AG04449 (cell line): ENCODE measurements at regions of chr5 and their contacts with region 1.

Region 1: DNA sequence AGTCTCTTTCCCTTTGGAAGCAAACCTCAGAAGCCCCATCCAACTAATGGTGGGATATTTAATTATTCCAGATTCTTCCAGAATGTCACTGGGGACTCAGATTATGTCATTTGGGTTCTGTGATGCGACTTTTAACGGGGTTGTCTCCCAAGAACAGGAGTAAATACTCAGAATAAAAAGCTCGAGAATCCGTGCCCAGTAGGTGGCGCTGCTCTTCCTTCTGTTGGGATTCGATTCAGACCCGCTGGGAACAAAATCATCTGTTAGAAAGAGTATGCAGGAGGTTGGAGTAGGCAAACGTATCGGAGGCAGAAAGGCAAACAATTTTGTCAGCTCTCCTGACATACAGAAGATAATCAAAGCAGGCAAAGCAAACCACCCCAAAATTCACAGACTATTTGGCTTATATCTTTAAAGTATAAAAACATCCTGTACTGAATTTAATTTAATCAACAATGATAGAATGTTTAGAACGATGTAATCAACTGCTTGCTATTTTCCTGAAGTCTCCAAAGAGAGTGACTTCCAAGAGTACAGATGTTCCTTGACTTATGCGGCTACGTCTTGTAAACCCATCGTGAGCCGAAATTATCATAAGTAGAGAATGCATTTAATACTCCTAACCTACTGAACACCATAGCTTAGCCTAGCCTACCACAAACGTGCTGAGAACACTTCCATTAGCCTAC is 169.8 kb upstream of the RAI14 start:
- DNase-seq: peak; percentile 54
- H3K4me3 ChIP-seq: no peak overlapping the region
- CTCF ChIP-seq: peak; percentile 70

Region 2: GRCh38 chr5:33537240-33537639 is 949.1 kb before region 1 on chr5:
- CTCF ChIA-PET with region 1: no interaction called
- POLR2A ChIA-PET with region 1: no interaction called
- DNase-seq: no peak
- H3K4me3 ChIP-seq: no peak overlapping the region
- CTCF ChIP-seq: no peak

Region 3: DNA sequence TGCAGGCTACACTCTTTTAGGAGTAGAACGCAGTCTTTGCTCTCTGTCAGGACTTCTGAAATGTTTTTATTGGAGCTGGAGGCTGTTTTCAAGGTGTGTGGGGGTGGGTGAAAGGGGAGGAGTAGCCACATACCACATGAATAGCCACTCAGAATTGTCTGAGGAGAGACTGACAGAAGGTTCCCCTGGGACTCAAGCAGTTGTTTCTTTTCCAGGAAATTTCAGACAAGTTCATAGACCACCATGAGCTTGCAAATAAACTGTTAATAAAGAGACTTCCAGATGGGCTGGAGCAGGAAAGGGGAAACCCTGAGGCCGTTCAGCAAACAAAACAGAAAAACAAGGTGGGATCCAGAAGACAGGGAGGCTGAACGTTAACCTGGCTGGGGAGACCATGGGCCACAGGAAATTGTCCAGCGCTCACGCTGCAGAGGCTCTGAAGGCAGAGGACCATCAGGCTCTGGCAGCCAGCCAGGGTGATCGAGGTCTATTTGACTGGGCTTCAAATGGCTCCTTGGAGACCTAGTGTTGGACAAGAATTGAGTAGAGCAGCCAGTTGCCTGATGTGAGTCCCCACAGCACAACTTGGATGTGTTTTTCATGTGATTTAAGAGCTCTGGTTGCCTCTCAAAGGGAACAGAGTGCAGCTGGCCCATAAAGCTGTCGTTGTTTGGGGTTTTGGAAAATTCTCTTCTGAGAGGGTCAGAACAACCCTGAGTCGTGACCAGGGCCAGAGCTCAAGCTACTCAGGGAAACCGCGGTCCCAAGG is 10.6 kb after region 1 on chr5:
- CTCF ChIA-PET with region 1: interaction called, 12 read pairs
- POLR2A ChIA-PET with region 1: interaction called, 4 read pairs
- DNase-seq: no peak
- H3K4me3 ChIP-seq: no peak overlapping the region
- CTCF ChIP-seq: no peak

Region 4: GRCh38 chr5:34533582-34534522 is 47.5 kb after region 1 on chr5:
- CTCF ChIA-PET with region 1: interaction called, 22 read pairs
- POLR2A ChIA-PET with region 1: no interaction called
- DNase-seq: peak; percentile 88
- H3K4me3 ChIP-seq: no peak overlapping the region
- CTCF ChIP-seq: no peak

Region 5: GRCh38 chr5:34674187-34674586 is 187.9 kb after region 1 on chr5:
- CTCF ChIA-PET with region 1: interaction called, 10 read pairs
- POLR2A ChIA-PET with region 1: no interaction called
- DNase-seq: peak; percentile 92
- H3K4me3 ChIP-seq: no peak overlapping the region
- CTCF ChIP-seq: no peak

Region 6: GRCh38 chr5:34717426-34718327 is 231.4 kb after region 1 on chr5:
- CTCF ChIA-PET with region 1: interaction called, 12 read pairs
- POLR2A ChIA-PET with region 1: no interaction called
- DNase-seq: peak; percentile 97
- H3K4me3 ChIP-seq: no peak overlapping the region
- CTCF ChIP-seq: no peak

Region 7: GRCh38 chr5:34944044-34944443 is 457.7 kb after region 1 on chr5:
- CTCF ChIA-PET with region 1: no interaction called
- POLR2A ChIA-PET with region 1: no interaction called
- DNase-seq: no peak
- H3K4me3 ChIP-seq: no peak overlapping the region
- CTCF ChIP-seq: no peak

Region 8: DNA sequence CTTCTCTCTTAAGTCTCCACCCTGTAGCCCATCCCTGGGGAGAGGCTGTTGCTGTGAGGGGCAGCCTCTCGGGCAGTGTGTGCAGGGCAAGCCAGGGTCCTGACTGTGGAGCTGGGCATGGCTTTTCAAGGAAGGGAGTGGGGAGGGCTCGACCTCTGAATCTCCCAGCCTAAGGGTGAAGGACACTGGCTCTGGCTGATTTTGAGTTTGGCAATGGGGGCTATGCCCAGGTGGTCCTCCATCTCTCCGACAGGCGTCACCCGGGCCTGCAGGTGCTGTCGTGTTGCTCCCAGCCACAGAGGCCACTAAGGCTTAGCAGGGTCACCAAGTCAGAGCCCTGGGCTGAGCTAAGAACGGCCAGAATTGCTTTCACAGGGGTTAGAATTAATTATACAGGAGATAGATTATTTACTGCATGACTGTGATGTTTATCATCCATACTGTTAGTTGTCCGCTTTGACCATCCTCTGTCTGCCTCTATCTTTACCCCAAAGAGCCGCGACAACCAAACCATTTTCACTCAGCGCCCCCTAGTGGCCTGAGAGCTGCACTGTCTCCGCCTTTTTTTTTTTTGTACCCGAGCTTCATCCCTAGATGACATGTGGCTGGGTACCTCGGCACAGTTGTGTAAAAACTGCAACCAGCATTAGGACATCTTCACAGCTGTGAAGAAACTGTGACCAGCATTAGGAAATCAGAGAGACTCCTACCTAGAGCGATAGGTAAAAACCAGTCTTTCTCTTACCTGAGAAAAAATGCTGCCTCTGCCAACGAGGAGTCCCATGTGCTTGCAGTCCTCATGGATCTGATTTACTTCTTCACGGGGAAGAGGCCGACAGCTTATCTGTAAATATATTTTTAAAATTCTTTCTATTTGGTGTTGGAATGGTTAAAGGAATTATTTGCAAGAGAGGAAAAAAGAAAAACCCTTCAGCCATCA is 517.0 kb after region 1 on chr5:
- CTCF ChIA-PET with region 1: interaction called, 10 read pairs
- POLR2A ChIA-PET with region 1: no interaction called
- DNase-seq: no peak
- H3K4me3 ChIP-seq: no peak overlapping the region
- CTCF ChIP-seq: peak; percentile 79